MCF 10A (cell line): ENCODE measurements at regions of chr2 and their contacts with region 1.

Region 1: GRCh38 chr2:237685408-237685807 is 58.0 kb downstream of the LRRFIP1 start:
- DNase-seq: peak; percentile 44
- H3K4me3 Mint-ChIP-seq: no peak overlapping the region
- H3K27ac Mint-ChIP-seq: no peak overlapping the region
- H3K4me1 Mint-ChIP-seq: peaks cover 26% of the 10 kb centered on the region
- H3K27me3 Mint-ChIP-seq: no peaks in the 10 kb centered on the region
- CTCF ChIP-seq: peak; percentile 15

Region 2: DNA sequence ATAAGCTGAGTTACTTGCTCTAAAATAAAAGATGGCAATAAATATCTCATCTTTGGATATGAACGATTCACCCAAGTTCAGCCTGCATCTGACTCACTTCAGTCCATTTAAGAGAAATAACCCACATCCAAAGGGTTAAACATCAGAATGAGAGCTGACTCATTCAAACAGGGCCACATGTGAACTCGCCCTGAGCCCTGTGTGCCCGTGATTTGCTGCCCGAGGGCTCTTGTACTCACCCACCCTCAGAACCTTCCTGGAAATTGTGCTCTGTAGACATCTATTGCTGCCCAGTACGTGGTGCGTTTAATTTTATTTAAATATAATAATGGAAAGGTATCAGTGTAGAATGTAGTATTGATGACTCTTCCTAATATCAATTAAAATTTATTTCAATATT is 46.3 kb after region 1 on chr2:
- CTCF ChIA-PET with region 1: interaction called, 3 read pairs
- POLR2A ChIA-PET with region 1: interaction called, 15 read pairs
- intact Hi-C with region 1: no loop called
- DNase-seq: peak; percentile 86
- H3K4me3 Mint-ChIP-seq: peak overlapping the region; percentile 45
- H3K27ac Mint-ChIP-seq: peak overlapping the region; percentile 62
- H3K4me1 Mint-ChIP-seq: peaks cover 34% of the 10 kb centered on the region
- H3K27me3 Mint-ChIP-seq: no peaks in the 10 kb centered on the region
- CTCF ChIP-seq: no peak

Region 3: DNA sequence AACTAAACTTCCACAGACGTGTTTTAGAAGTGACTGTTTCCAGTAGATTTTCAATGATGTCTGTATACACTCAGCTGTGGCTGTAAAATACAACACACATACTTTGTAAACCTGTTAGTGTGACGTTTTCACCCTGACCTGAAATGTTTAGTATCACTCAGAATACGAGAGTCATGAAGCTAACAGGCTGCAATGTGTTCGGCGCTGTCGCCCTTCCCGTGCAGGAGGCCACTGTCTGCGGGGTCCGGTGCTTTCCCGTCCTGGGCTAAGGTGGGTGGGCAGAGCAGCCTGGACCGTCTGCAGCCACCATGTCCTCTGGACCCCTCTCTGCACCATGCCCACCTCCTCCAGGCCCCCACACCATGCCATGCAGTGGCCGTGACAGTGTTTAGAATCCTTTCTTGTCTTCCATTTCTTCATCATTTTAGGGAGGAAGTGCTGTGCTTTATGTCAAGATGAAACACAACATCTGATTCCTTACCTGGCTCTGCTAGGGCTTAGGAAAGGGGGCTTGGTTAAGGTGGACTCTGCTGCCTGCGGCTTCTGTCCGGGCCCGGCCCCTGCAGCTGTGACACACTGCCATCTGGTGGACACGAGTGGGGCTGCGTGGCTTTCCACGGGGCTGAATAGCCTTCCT is 59.3 kb after region 1 on chr2:
- CTCF ChIA-PET with region 1: interaction called, 11 read pairs
- POLR2A ChIA-PET with region 1: interaction called, 8 read pairs
- intact Hi-C with region 1: no loop called
- DNase-seq: peak; percentile 55
- H3K4me3 Mint-ChIP-seq: no peak overlapping the region
- H3K27ac Mint-ChIP-seq: peak overlapping the region; percentile 33
- H3K4me1 Mint-ChIP-seq: peaks cover 19% of the 10 kb centered on the region
- H3K27me3 Mint-ChIP-seq: no peaks in the 10 kb centered on the region
- CTCF ChIP-seq: peak; percentile 92

Region 4: DNA sequence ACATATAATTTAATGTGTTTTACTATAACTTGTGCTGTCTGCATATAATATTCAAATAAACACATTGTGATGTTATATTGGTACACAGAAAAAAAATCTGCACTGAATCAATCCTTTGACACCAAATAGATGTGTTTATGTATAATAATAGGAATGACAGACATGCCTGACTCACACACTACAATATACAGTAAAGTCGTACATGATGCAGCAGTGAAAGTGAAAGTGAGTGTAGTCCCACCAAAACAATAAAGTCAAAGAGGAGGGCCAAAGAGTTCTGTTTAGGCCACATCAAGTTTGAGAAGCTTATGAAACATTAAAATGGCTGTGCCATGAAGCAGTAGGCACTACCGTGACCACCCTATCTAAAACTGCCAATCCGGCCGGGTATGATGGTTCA is 104.9 kb after region 1 on chr2:
- CTCF ChIA-PET with region 1: no interaction called
- POLR2A ChIA-PET with region 1: no interaction called
- intact Hi-C with region 1: no loop called
- DNase-seq: no peak
- H3K4me3 Mint-ChIP-seq: no peak overlapping the region
- H3K27ac Mint-ChIP-seq: no peak overlapping the region
- H3K4me1 Mint-ChIP-seq: no peaks in the 10 kb centered on the region
- H3K27me3 Mint-ChIP-seq: no peaks in the 10 kb centered on the region
- CTCF ChIP-seq: no peak

Region 5: DNA sequence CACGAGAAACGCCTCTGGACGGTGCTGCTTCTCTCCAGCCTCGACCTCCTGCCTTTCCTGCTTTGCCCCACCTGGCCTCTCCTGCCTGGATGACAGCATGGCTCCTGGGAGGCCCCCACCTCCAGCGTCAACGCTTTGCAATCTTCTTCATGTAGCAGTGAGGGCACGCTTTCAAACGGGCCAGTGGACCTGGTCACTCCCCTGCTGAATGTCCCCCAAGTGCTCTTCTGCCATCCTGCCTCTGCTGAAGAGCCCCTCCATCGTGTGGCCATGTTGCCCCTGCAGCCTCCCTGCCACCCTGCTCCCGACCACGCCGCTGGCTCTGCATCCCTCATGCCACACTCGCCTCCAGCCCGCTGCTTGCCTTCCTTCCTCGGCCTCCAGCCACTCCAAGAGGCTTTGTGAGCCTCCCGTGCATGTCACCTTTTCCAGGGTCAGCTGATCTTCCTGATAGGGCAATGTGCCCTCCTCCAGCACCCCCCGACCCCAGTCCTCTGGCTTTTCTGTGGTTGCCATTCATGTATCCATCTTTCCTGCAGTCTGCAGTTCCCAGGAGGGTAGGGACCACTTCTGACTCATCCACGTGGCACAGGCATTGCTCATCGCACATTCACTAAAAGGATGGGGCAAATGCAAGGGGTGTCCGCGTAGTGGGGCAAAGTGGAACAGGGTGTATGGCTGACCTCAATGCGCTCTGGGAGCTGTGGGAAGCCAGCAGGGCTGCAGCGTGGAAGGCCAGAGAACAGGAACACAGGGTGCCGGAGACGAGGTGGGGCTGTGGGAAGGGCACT is 1431.2 kb after region 1 on chr2:
- CTCF ChIA-PET with region 1: no interaction called
- POLR2A ChIA-PET with region 1: no interaction called
- intact Hi-C with region 1: no loop called
- DNase-seq: peak; percentile 29
- H3K4me3 Mint-ChIP-seq: no peak overlapping the region
- H3K27ac Mint-ChIP-seq: no peak overlapping the region
- H3K4me1 Mint-ChIP-seq: peaks cover 11% of the 10 kb centered on the region
- H3K27me3 Mint-ChIP-seq: no peaks in the 10 kb centered on the region
- CTCF ChIP-seq: no peak